ENCODE measurements at regions of chr16 and their contacts with region 1.

Region 1: GRCh38 chr16:80540516-80541272 is at the start of gene DYNLRB2:
- DNase-seq: peak; percentile 82 to 94 (median 93)
- ATAC-seq: peak; percentile 94
- H3K4me3 ChIP-seq: peak within 1 kb of the TSS; percentile 94
- H3K4me3 Mint-ChIP-seq: peak within 1 kb of the TSS; percentile 93 to 98 (median 96)
- H3K27ac ChIP-seq: peak within 1 kb of the TSS; percentile 77
- H3K27ac Mint-ChIP-seq: peak within 1 kb of the TSS; percentile 96 to 99 (median 97)
- H3K4me1 ChIP-seq: peaks cover 6 to 13% of the 10 kb centered on the region in 2 donors
- H3K4me1 Mint-ChIP-seq: peaks cover 16 to 33% (median 19%) of the 10 kb centered on the region in 7 donors
- H3K27me3 ChIP-seq: no peaks in the 10 kb centered on the region
- H3K27me3 Mint-ChIP-seq: peaks cover 0 to 9% (median 3%) of the 10 kb centered on the region in 5 donors
- total RNA-seq, gene DYNLRB2: 0.92 to 1.2 TPM in 2 of 5 experiments, not detected in the others

Region 2: DNA sequence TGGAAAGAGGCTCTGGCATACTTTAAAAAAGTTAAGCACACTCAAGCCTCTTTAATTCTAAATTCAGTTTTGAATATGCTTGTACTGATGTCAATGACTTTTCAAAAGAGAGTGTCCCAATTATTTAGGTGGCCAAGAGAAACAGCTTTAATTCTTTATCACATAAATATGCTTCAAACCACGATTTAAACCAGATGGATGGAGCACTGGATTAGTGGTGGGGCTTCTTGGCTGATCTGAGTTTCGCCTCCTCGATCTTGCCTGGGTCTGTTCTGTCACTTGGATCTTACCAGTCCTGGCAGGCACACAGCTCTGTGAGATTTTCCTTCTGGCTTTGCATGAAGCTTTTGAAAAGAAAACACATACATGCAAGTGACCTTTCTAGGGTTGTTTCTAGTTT is 1408.0 kb before region 1 on chr16:
- CTCF ChIA-PET with region 1: no interaction called
- POLR2A ChIA-PET with region 1: no interaction called
- intact Hi-C with region 1: no loop called
- DNase-seq: no peak
- ATAC-seq: no peak
- H3K4me3 ChIP-seq: no peak overlapping the region
- H3K4me3 Mint-ChIP-seq: no peak overlapping the region
- H3K27ac ChIP-seq: no peak overlapping the region
- H3K27ac Mint-ChIP-seq: no peak overlapping the region
- H3K4me1 ChIP-seq: no peaks in the 10 kb centered on the region
- H3K4me1 Mint-ChIP-seq: peaks cover 0 to 4% (median 0%) of the 10 kb centered on the region in 7 donors
- H3K27me3 ChIP-seq: no peaks in the 10 kb centered on the region
- H3K27me3 Mint-ChIP-seq: no peaks in the 10 kb centered on the region

Region 3: DNA sequence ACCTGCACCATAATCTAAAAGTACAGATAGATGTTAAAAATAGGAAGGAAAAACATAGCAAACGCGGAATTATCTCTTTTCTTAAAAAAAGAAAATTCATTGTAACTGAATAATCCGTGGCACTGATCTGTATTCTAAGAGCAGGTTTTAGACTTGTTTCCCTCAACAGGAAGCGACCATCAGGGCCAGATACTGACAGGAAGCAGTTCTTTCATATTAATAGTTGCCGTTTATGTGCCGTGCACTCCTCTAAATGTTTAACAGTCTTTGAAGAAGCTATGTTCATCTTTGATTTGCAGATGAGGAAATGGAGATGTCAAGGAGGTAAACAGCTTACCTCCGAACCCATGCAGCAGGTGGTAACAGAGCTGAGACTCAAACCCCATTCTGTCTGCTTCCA is 23.7 kb after region 1 on chr16:
- CTCF ChIA-PET with region 1: interaction called, 3 read pairs
- POLR2A ChIA-PET with region 1: interaction called, 4 read pairs
- intact Hi-C with region 1: loop called (anchors 1 kb)
- DNase-seq: peak in 6 of 9 donors; percentile 5 to 44 (median 33)
- ATAC-seq: peak; percentile 38
- H3K4me3 ChIP-seq: no peak overlapping the region
- H3K4me3 Mint-ChIP-seq: peak overlapping the region in 9 of 10 donors; percentile 31 to 74 (median 61)
- H3K27ac ChIP-seq: peak overlapping the region; percentile 11
- H3K27ac Mint-ChIP-seq: peak overlapping the region in 8 of 9 donors; percentile 60 to 92 (median 83)
- H3K4me1 ChIP-seq: peaks cover 14 to 17% of the 10 kb centered on the region in 2 donors
- H3K4me1 Mint-ChIP-seq: peaks cover 17 to 41% (median 25%) of the 10 kb centered on the region in 7 donors
- H3K27me3 ChIP-seq: no peaks in the 10 kb centered on the region
- H3K27me3 Mint-ChIP-seq: peaks cover 0 to 9% (median 0%) of the 10 kb centered on the region in 5 donors

Region 4: DNA sequence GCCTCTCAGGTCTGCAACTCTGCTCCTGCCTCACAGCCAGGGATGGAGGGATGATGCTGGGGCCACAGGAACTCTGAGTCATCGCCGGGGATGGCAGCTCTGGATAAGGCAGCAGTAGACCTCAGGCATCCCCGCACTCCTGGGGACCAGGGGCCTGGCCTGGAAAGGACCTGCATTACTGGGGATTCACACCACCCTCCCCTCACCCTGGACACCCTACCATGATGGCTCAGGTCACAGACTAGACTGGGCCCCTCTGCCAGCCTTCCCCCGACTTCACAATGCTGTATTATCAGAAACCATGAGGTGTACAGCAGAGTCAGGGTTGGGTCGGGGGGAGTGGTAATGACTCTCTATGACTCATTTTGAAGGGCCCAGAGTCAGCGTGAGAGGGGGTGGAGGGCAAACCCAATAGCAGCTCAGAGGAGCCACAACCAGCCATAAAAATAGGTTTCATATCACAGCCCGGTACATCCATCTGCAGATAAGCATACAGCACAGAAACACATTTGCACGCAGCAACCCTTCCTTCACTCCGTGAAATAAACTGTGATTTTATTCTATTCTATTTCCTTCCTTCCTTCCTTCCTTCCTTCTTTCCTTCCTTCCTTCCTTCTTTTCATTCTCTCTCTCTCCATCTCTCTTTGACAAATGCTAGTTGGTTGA is 28.9 kb after region 1 on chr16:
- CTCF ChIA-PET with region 1: interaction called, 3 read pairs
- POLR2A ChIA-PET with region 1: interaction called, 4 read pairs
- intact Hi-C with region 1: loop called (anchors 1 kb)
- DNase-seq: peak in 2 of 9 donors; percentile 24 to 74
- ATAC-seq: peak; percentile 78
- H3K4me3 ChIP-seq: no peak overlapping the region
- H3K4me3 Mint-ChIP-seq: peak overlapping the region in 4 of 10 donors; percentile 2 to 65 (median 12)
- H3K27ac ChIP-seq: no peak overlapping the region
- H3K27ac Mint-ChIP-seq: peak overlapping the region in 5 of 9 donors; percentile 3 to 86 (median 38)
- H3K4me1 ChIP-seq: peaks cover 5 to 19% of the 10 kb centered on the region in 2 donors
- H3K4me1 Mint-ChIP-seq: peaks cover 16 to 51% (median 28%) of the 10 kb centered on the region in 7 donors
- H3K27me3 ChIP-seq: no peaks in the 10 kb centered on the region
- H3K27me3 Mint-ChIP-seq: peaks cover 0 to 9% (median 0%) of the 10 kb centered on the region in 5 donors

Region 5: DNA sequence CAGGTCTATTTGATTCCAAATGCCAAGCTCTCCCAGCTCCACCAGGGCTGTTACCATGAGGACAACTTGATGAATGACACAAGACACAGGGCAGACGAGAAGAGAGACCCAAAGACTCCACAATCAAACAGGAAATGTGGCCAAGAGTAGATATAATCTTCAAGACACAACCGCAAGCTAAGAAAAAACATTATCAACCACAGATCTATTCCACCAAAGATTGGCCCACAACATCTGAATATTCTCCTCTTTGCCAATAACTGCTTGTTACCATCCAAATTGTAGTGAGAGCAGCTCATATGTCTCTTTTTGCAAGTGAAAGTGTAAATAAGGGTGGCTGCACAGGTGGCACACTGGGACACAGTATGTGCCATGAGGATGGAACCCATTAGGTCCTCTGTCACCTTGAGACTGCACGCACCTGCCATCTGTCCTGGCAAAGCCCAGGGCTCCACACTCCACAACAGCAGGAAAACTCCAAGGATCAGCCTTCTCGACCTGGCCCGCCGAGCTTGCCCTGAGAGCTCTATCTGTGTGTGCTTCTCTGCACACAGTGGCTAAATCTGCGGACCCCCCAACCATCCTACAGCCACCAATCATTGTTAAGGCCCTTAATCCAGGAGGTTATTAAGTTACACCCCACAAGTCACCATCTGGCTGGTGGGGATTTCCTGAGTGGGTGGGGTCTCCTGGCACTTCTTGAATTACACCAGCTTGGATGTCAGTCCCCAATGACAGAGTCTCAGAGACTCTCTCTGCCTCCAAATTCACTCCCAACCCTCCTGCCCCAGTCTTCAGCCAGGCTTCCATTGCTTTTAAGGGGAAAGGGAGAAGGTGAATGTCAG is 50.6 kb after region 1 on chr16:
- CTCF ChIA-PET with region 1: no interaction called
- POLR2A ChIA-PET with region 1: interaction called, 5 read pairs
- intact Hi-C with region 1: loop called (anchors 1 kb)
- DNase-seq: peak in 8 of 9 donors; percentile 35 to 83 (median 68)
- ATAC-seq: peak; percentile 92
- H3K4me3 ChIP-seq: peak overlapping the region; percentile 42
- H3K4me3 Mint-ChIP-seq: peak overlapping the region; percentile 45 to 79 (median 64)
- H3K27ac ChIP-seq: no peak overlapping the region
- H3K27ac Mint-ChIP-seq: peak overlapping the region in 8 of 9 donors; percentile 1 to 82 (median 38)
- H3K4me1 ChIP-seq: peaks cover 10 to 19% of the 10 kb centered on the region in 2 donors
- H3K4me1 Mint-ChIP-seq: peaks cover 17 to 50% (median 29%) of the 10 kb centered on the region in 7 donors
- H3K27me3 ChIP-seq: no peaks in the 10 kb centered on the region
- H3K27me3 Mint-ChIP-seq: peaks cover 0 to 35% (median 5%) of the 10 kb centered on the region in 5 donors

Region 6: GRCh38 chr16:80656711-80657150 is 116.0 kb after region 1 on chr16:
- CTCF ChIA-PET with region 1: no interaction called
- POLR2A ChIA-PET with region 1: no interaction called
- intact Hi-C with region 1: loop called (anchors 1 to 2 kb)
- DNase-seq: peak in 8 of 9 donors; percentile 25 to 60 (median 48)
- ATAC-seq: peak; percentile 85
- H3K4me3 ChIP-seq: peak overlapping the region; percentile 56
- H3K4me3 Mint-ChIP-seq: peak overlapping the region; percentile 71 to 92 (median 87)
- H3K27ac ChIP-seq: peak overlapping the region; percentile 68
- H3K27ac Mint-ChIP-seq: peak overlapping the region; percentile 80 to 97 (median 91)
- H3K4me1 ChIP-seq: peaks cover 6 to 14% of the 10 kb centered on the region in 2 donors
- H3K4me1 Mint-ChIP-seq: peaks cover 18 to 47% (median 28%) of the 10 kb centered on the region in 7 donors
- H3K27me3 ChIP-seq: no peaks in the 10 kb centered on the region
- H3K27me3 Mint-ChIP-seq: no peaks in the 10 kb centered on the region

Region 7: GRCh38 chr16:81095953-81096717 is 555.4 kb after region 1 on chr16 and contains the start of gene GCSH:
- CTCF ChIA-PET with region 1: no interaction called
- POLR2A ChIA-PET with region 1: no interaction called
- intact Hi-C with region 1: loop called in 1 of 2 experiments (anchors 5 kb)
- DNase-seq: peak; percentile 94 to 99 (median 98)
- ATAC-seq: peak; percentile 98
- H3K4me3 ChIP-seq: peak within 1 kb of the TSS; percentile 71
- H3K4me3 Mint-ChIP-seq: peak within 1 kb of the TSS; percentile 72 to 93 (median 82)
- H3K27ac ChIP-seq: peak within 1 kb of the TSS; percentile 67
- H3K27ac Mint-ChIP-seq: peak within 1 kb of the TSS; percentile 45 to 87 (median 71)
- H3K4me1 ChIP-seq: peaks cover 0 to 6% of the 10 kb centered on the region in 2 donors
- H3K4me1 Mint-ChIP-seq: peaks cover 3 to 19% (median 9%) of the 10 kb centered on the region in 7 donors
- H3K27me3 ChIP-seq: no peaks in the 10 kb centered on the region
- H3K27me3 Mint-ChIP-seq: no peaks in the 10 kb centered on the region
- total RNA-seq, gene GCSH: 1.5 to 7.5 (median 4.9) TPM